T-cell (primary cell): ENCODE measurements at regions of chr13 and their contacts with region 1.

Region 1: DNA sequence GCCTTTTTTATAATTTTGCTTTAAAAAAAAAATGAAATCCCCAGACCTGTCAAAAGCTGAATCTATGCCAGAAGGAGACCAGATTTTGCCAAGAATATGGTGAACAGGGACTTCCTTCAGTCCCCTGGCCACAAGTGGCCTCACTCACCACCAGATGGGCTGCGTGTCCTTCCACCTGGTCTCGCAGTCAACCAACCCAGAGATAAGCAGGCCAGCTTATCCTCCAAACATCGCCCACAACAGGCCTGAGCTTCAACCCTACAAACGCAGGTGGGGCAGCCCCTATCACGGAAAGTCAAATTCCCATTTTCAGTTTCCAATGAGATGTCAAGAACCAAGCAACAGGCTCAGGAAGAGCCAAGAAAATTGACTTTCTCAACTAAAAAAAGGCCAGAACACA is 30.5 kb downstream of the STK24 start:
- DNase-seq: no peak
- ATAC-seq: no peak
- H3K4me3 ChIP-seq: no peak overlapping the region
- H3K4me3 Mint-ChIP-seq: no peak overlapping the region
- H3K27ac ChIP-seq: no peak overlapping the region
- H3K27ac Mint-ChIP-seq: peak overlapping the region in 1 of 2 donors; percentile 10
- H3K4me1 ChIP-seq: peaks cover 21 to 55% of the 10 kb centered on the region in 2 experiments
- H3K4me1 Mint-ChIP-seq: peaks cover 89 to 93% (median 93%) of the 10 kb centered on the region in 3 donors
- H3K27me3 ChIP-seq: no peaks in the 10 kb centered on the region
- H3K27me3 Mint-ChIP-seq: no peaks in the 10 kb centered on the region

Region 2: GRCh38 chr13:98173431-98174152 is 372.8 kb before region 1 on chr13:
- CTCF ChIA-PET with region 1: no interaction called
- POLR2A ChIA-PET with region 1: no interaction called
- DNase-seq: no peak
- ATAC-seq: no peak
- H3K4me3 ChIP-seq: no peak overlapping the region
- H3K4me3 Mint-ChIP-seq: no peak overlapping the region
- H3K27ac ChIP-seq: no peak overlapping the region
- H3K27ac Mint-ChIP-seq: no peak overlapping the region
- H3K4me1 ChIP-seq: no peaks in the 10 kb centered on the region
- H3K4me1 Mint-ChIP-seq: no peaks in the 10 kb centered on the region
- H3K27me3 ChIP-seq: peaks cover 0 to 5% of the 10 kb centered on the region in 2 experiments
- H3K27me3 Mint-ChIP-seq: peaks cover 14 to 26% of the 10 kb centered on the region in 2 donors

Region 3: GRCh38 chr13:98535501-98536354 is 10.7 kb before region 1 on chr13:
- CTCF ChIA-PET with region 1: interaction called in 1 of 2 experiments, 10 read pairs
- POLR2A ChIA-PET with region 1: no interaction called
- DNase-seq: no peak
- ATAC-seq: peak in 1 of 4 experiments; percentile 29
- H3K4me3 ChIP-seq: no peak overlapping the region
- H3K4me3 Mint-ChIP-seq: peak overlapping the region; percentile 21 to 61 (median 40)
- H3K27ac ChIP-seq: no peak overlapping the region
- H3K27ac Mint-ChIP-seq: peak overlapping the region; percentile 52 to 76
- H3K4me1 ChIP-seq: peaks cover 5 to 80% of the 10 kb centered on the region in 2 experiments
- H3K4me1 Mint-ChIP-seq: peaks cover 94% of the 10 kb centered on the region in 3 donors
- H3K27me3 ChIP-seq: no peaks in the 10 kb centered on the region
- H3K27me3 Mint-ChIP-seq: no peaks in the 10 kb centered on the region

Region 4: GRCh38 chr13:98641075-98641474 is 94.7 kb after region 1 on chr13:
- CTCF ChIA-PET with region 1: no interaction called
- POLR2A ChIA-PET with region 1: no interaction called
- DNase-seq: no peak
- ATAC-seq: no peak
- H3K4me3 ChIP-seq: no peak overlapping the region
- H3K4me3 Mint-ChIP-seq: no peak overlapping the region
- H3K27ac ChIP-seq: no peak overlapping the region
- H3K27ac Mint-ChIP-seq: no peak overlapping the region
- H3K4me1 ChIP-seq: no peaks in the 10 kb centered on the region
- H3K4me1 Mint-ChIP-seq: no peaks in the 10 kb centered on the region
- H3K27me3 ChIP-seq: peaks cover 0 to 11% of the 10 kb centered on the region in 2 experiments
- H3K27me3 Mint-ChIP-seq: peaks cover 9 to 25% of the 10 kb centered on the region in 2 donors